ENCODE measurements at regions of chr18 and their contacts with region 1.

Region 1: DNA sequence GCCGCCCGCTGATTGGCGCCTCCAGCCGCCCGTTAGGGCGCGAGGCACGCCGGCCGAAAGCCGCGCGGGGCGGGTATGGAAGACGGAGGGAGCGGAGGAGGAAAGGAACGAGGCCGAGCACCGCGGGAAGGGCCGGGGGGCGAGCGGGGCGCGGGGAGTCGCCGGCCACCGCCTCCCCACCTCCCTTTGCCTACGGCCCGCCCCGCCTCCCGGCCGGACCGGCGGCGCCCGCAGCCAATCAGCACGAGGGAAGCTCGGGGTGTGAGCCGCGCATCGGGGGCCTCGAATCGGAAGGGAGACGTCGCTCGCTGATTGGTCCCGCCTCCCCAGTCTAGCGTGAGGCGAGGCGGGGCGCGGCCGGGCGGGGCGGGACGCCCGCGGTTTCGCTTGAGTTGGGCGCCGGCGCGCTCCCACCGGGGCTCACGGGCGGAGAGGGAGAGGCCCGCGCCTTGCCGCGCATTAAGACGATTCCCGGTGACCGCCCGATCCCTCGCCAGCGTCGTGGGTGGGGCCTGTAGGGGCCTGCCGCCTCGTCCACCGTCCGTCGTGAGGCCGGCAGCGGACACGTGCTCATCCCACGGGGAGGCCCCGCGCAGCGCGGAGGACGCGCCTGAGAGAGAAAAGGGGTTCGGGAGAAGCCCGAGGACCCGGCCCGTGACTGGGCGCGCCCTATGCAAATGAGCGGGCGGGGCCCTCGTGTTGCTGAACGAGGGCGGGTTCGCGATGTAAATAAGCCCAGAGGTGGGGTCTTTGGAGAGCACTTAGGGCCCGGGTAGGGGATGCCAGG is 665 bp upstream of the SMAD2 start:
- DNase-seq: peak; percentile 98
- ATAC-seq: peak; percentile 94

Region 2: DNA sequence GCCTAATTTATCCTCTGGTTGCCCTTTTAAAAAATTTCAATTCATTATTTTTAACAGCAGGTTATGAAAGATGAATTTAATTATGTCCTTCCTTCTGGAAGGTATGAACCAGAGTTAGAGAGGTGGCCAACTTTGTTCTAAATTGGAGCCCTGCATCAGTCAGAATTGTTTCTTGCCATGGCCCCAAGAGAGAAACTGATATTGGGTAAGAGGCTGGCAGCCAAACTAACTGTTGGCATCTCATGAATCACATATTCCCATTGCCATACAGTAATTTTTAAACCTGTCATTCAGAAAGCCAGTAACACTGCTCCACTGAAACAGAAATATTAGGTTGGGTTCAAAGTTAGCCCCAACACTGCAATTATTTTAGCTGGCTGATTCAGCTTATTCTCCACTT is 68.1 kb before region 1 on chr18:
- intact Hi-C with region 1: loop called (anchors 10 kb)
- DNase-seq: no peak
- ATAC-seq: peak; percentile 94

Region 3: GRCh38 chr18:48007955-48008701 is 77.0 kb after region 1 on chr18:
- intact Hi-C with region 1: loop called (anchors 5 kb)
- DNase-seq: peak; percentile 73
- ATAC-seq: peak; percentile 94

Region 4: DNA sequence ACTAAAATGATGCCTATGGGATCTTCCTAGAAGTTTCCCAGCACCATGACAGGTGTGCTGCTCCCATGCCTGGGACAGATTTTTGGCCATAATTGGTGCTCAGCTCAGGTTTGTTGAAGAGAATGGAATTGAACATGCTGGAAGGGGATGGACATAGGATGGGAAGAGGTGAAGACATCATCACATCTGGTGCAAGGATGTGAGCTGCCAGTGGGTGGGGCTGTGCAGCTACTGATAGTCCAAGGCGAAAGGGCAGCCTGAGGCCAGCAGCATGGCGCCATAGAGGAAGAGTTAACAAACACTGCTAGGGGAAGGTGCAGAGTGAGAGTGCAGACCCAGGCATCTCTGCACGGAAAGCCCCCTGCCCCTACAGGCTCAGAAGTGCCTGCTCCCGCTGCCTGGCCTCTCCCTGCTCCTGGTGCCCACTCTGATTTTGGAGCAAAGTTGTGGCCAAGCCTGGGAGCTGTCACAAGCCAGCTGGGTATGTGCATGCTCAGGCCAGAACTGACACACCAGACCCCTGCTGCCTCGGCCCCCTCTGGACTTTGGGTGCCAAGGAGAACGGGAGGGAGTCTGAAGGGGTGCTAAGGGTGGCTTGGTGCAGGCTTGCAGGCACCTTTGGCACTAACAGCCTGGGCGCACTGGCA is 299.5 kb after region 1 on chr18:
- intact Hi-C with region 1: no loop called
- DNase-seq: peak; percentile 78
- ATAC-seq: peak; percentile 55